Activated CD8-positive, alpha-beta T cell treated with anti-CD3 and anti-CD28 coated beads, Interleukin-2, amount 10 ng/mL, durations not matched to agents 7 days and 5 days (primary cell): ENCODE measurements at regions of chr18 and their contacts with region 1.

Region 1: GRCh38 chr18:56650944-56651770 is at the start of gene WDR7:
- DNase-seq: peak; percentile 97
- ATAC-seq: peak; percentile 93
- H3K4me3 Mint-ChIP-seq: peak within 1 kb of the TSS; percentile 92
- H3K27ac Mint-ChIP-seq: peak within 1 kb of the TSS; percentile 95
- H3K4me1 Mint-ChIP-seq: peaks cover 77% of the 10 kb centered on the region
- H3K27me3 Mint-ChIP-seq: no peaks in the 10 kb centered on the region
- total RNA-seq, gene WDR7: 39.7 to 44.2 TPM

Region 2: DNA sequence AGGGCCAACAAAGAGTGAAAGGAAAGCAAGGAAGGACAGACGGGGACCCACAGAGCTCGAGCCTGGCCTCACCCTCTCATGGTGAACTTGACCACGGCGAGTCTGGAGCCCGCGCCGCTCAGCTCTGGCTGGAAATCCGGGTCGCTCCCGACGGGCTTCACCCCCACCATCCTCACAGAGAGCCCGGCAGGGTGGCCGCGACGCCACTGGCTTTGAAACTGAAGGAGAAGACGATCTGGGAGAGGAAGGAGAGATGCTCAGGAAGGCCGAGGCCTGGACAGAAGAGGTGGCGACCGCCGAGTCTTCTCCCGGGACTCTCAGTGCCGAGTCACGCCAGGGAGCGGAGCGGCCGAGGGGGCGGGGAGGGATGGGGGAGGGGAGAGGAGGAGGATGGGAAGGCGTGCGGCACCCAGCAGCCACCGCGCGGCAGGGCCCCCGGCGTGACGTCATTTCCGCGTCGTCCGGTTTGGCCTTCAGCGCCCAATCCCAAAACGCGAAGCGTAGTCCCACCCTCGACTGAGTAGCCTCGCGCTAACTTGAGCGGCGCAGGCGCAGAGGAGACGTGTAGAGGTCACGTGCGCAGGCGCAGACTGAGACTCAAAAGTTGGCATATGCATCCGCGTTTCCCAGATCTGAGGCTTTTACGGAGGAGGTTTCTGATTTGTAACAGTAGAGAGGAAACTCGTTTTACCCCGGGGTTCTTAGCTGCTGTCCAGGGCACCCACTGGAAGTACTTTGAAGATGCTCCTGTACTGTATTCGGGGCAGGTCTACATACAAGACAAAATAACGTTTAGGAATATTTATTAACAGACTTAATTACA is 12.7 kb before region 1 on chr18 and contains the start of gene TXNL1:
- CTCF ChIA-PET with region 1: interaction called, 31 read pairs
- POLR2A ChIA-PET with region 1: interaction called, 45 read pairs
- DNase-seq: peak; percentile 98
- ATAC-seq: peak; percentile 98
- H3K4me3 Mint-ChIP-seq: peak within 1 kb of the TSS; percentile 100
- H3K27ac Mint-ChIP-seq: peak within 1 kb of the TSS; percentile 98
- H3K4me1 Mint-ChIP-seq: peaks cover 40% of the 10 kb centered on the region
- H3K27me3 Mint-ChIP-seq: no peaks in the 10 kb centered on the region
- total RNA-seq, gene TXNL1: 51.9 to 54.4 TPM

Region 3: GRCh38 chr18:56709463-56709862 is 58.3 kb after region 1 on chr18:
- CTCF ChIA-PET with region 1: interaction called, 73 read pairs
- POLR2A ChIA-PET with region 1: interaction called, 4 read pairs
- DNase-seq: peak; percentile 70
- ATAC-seq: peak; percentile 100
- H3K4me3 Mint-ChIP-seq: no peak overlapping the region
- H3K27ac Mint-ChIP-seq: no peak overlapping the region
- H3K4me1 Mint-ChIP-seq: peaks cover 5% of the 10 kb centered on the region
- H3K27me3 Mint-ChIP-seq: no peaks in the 10 kb centered on the region

Region 4: DNA sequence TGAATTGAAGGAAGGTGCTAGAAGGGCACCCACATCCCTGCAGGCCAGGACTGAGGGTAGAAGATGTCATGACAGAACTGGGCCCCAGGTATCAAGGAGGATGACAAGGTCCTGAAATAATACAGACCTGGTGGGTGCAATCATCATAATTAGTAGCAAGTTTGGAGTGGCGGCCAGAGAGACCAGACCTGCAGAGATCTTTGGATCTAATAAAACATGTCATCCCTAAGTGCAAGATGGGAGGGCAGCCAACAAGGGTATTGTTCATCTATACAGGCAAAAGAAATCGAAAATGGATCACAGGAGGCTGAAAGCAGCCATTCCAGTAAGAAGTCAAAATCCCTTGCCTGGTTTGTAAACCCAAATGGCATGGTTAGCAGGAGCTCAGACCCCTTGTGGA is 384.4 kb after region 1 on chr18:
- CTCF ChIA-PET with region 1: no interaction called
- POLR2A ChIA-PET with region 1: no interaction called
- DNase-seq: no peak
- ATAC-seq: no peak
- H3K4me3 Mint-ChIP-seq: no peak overlapping the region
- H3K27ac Mint-ChIP-seq: no peak overlapping the region
- H3K4me1 Mint-ChIP-seq: no peaks in the 10 kb centered on the region
- H3K27me3 Mint-ChIP-seq: no peaks in the 10 kb centered on the region